ENCODE measurements at regions of chr14 and their contacts with region 1.

Region 1: DNA sequence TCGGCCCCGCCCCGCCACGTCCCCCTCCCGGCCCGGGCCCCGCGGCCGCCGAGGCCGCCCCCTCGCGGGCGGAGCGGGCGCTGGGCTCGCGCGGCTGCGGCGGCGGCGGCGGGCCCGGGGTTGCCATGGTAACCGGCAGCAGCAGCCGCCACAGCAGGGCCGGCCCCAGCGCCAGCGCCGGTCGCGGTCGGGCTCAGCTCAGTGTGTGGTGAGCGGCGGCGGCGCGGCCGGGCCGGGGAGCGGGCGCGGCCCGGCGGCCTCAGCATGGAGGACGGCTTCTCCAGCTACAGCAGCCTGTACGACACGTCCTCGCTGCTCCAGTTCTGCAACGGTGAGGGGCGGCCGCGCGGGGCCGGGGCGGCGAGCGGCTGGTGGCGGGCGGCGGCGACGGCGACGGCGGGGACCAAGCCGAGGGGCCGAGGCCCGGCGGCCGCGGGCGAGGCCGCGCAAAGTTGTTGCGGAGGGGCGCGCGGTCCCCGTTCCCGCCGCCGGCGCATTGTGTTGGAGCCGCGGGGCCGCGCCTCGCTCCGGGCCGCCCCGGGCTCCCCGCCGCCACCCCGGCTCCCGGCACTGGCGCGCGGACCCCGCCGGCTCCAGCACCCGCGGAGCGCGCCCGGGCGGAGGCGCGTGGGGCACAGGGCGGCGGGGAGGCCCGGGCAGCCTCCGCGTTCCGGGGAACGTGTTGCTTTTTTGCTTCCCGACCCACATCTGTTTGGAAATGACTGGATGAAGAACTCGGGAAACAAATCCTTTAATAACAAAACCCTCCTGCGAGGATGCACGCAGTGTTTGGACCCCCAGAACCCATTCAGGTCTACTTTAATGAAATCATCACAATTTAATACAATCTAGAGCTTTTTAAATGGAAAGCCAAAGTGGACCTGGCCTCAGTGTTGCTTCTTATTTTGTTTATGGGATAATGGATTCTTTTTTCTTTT is at the start of gene EML1:
- DNase-seq: no peak
- H3K4me3 ChIP-seq: peak within 1 kb of the TSS; percentile 20 to 76 (median 54)
- H3K27ac ChIP-seq: peak within 1 kb of the TSS; percentile 53 to 95 (median 80)
- H3K4me1 ChIP-seq: peaks cover 4 to 38% (median 22%) of the 10 kb centered on the region in 3 donors
- H3K27me3 ChIP-seq: peaks cover 0 to 7% (median 0%) of the 10 kb centered on the region in 4 donors
- CTCF ChIP-seq: no peak
- POLR2A ChIP-seq: no peak
- total RNA-seq, gene EML1: 3.0 to 22.9 (median 9.4) TPM

Region 2: DNA sequence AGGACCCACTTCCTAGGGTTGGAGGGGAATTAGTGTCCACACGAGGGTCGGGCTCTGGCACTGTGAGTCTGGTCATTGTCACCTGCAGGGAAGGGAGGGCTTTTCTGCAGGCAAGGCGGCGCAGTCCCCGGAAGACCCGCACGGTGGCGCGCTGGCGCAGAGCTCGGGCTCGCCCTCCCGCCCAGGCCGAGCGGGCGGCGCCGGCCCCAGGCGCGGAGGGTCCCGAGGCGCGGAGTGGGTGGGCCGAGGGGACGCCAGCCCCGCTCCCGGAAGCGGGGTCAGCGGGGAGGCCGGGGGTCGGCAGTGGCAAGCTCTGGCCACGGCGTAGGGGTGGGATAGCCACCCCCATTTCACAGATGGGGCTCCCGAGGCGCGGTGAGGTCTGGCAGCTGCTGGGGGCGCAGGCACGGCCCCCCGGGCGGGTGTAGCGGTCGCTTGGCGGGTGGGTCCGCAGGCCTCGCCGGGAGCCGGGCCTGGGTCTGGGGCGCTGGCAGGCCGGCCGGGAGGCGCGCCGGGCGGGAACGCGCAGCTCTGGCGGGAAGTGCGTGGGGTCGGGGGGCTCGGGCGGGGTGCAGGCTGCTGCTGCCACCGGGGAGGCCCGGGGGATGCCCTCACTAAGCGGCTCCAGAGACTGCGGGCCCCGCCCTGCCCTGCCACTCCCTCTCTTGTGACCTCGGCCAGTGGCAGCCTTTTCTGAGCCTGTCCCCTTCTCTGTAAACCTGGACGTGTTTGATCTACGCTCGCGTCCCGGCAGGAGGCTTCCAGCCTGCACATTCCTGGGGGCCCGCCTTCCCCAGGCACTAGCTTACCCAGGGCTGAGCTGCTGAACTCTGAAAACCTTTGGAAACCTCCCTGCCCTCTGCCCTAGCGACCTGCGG is 63.3 kb before region 1 on chr14:
- intact Hi-C with region 1: loop called (anchors 10 kb)
- DNase-seq: no peak
- H3K4me3 ChIP-seq: peak overlapping the region; percentile 31 to 71 (median 51)
- H3K27ac ChIP-seq: peak overlapping the region in 2 of 4 donors; percentile 24 to 51
- H3K4me1 ChIP-seq: peaks cover 6 to 50% (median 13%) of the 10 kb centered on the region in 3 donors
- H3K27me3 ChIP-seq: peaks cover 0 to 89% (median 0%) of the 10 kb centered on the region in 4 donors
- CTCF ChIP-seq: peak in 5 of 6 experiments; percentile 76 to 92 (median 86)
- POLR2A ChIP-seq: no peak